Naive thymus-derived CD4-positive, alpha-beta T cell (primary cell): ENCODE measurements at regions of chr2 and their contacts with region 1.

Region 1: GRCh38 chr2:20242060-20243006 is 17.4 kb upstream of the SDC1 start:
- DNase-seq: peak in 1 of 9 donors; percentile 63
- ATAC-seq: peak; percentile 38
- H3K4me3 ChIP-seq: peak overlapping the region; percentile 28
- H3K4me3 Mint-ChIP-seq: peak overlapping the region; percentile 41 to 83 (median 63)
- H3K27ac ChIP-seq: no peak overlapping the region
- H3K27ac Mint-ChIP-seq: peak overlapping the region in 7 of 9 donors; percentile 34 to 78 (median 58)
- H3K4me1 ChIP-seq: no peaks in the 10 kb centered on the region
- H3K4me1 Mint-ChIP-seq: peaks cover 3 to 17% (median 9%) of the 10 kb centered on the region in 7 donors
- H3K27me3 ChIP-seq: no peaks in the 10 kb centered on the region
- H3K27me3 Mint-ChIP-seq: peaks cover 0 to 15% (median 6%) of the 10 kb centered on the region in 5 donors

Region 2: GRCh38 chr2:20424300-20425290 is 182.3 kb after region 1 on chr2:
- CTCF ChIA-PET with region 1: no interaction called
- POLR2A ChIA-PET with region 1: no interaction called
- intact Hi-C with region 1: loop called in 1 of 2 experiments (anchors 5 kb)
- DNase-seq: peak in 2 of 9 donors; percentile 19 to 41
- ATAC-seq: peak; percentile 74
- H3K4me3 ChIP-seq: no peak overlapping the region
- H3K4me3 Mint-ChIP-seq: peak overlapping the region in 6 of 10 donors; percentile 25 to 64 (median 48)
- H3K27ac ChIP-seq: no peak overlapping the region
- H3K27ac Mint-ChIP-seq: peak overlapping the region in 8 of 9 donors; percentile 23 to 88 (median 62)
- H3K4me1 ChIP-seq: peaks cover 7 to 10% of the 10 kb centered on the region in 2 donors
- H3K4me1 Mint-ChIP-seq: peaks cover 9 to 31% (median 22%) of the 10 kb centered on the region in 7 donors
- H3K27me3 ChIP-seq: no peaks in the 10 kb centered on the region
- H3K27me3 Mint-ChIP-seq: peaks cover 0 to 4% (median 0%) of the 10 kb centered on the region in 5 donors